Left ventricle myocardium inferior (tissue), 1 donor: ENCODE measurements at regions of chr5 and their contacts with region 1.

Region 1: GRCh38 chr5:64612344-64612961 is 77.8 kb upstream of the SHISAL2B start:
- DNase-seq: no peak
- H3K4me3 ChIP-seq: no peak overlapping the region
- H3K27ac ChIP-seq: no peak overlapping the region
- H3K4me1 ChIP-seq: no peaks in the 10 kb centered on the region
- H3K27me3 ChIP-seq: no peaks in the 10 kb centered on the region
- CTCF ChIP-seq: peak; percentile 85

Region 2: GRCh38 chr5:64229163-64229774 is 383.2 kb before region 1 on chr5:
- intact Hi-C with region 1: loop called (anchors 2 kb)
- DNase-seq: no peak
- H3K4me3 ChIP-seq: no peak overlapping the region
- H3K27ac ChIP-seq: no peak overlapping the region
- H3K4me1 ChIP-seq: no peaks in the 10 kb centered on the region
- H3K27me3 ChIP-seq: no peaks in the 10 kb centered on the region
- CTCF ChIP-seq: peak; percentile 74

Region 3: DNA sequence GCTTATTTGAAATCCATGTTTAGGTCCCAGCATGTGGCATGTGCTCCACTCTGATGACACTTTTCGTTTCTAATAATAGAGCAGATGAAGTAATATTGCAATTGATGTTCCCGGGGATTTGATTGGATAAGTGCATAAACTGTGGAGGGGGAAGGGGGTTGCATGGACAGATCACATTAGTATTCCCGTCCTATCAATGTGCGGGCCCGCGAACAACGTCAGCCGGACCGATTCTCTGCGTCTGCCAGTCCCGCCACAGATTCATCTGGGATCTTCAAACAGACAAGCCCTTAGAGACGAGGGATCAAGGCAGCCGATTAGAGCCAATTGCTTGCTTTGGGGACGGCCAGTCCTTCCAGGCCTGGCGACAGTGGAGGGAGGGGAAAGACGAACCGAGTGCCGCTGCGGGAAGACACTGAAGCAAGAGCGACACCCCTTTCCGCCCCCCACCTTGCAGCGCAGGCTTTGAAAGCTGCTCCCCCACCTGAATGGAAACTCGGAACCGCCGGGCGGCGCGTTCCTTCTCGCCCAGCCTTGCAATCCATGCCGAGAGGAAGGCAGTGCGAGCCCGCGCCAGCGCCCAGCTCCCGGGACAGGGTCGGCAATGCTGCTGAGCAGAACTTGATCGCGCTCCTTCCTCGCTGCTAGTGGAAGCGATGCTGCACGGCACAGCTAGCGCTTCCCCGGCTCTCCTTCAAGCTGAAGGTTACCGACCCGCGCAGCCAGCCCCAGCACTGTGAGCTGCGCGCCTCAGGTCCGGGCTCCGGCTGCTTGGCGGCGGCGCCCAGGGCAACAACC is 106.5 kb before region 1 on chr5 and contains the start of gene RGS7BP:
- intact Hi-C with region 1: loop called (anchors 10 kb)
- DNase-seq: peak; percentile 40
- H3K4me3 ChIP-seq: peak within 1 kb of the TSS; percentile 72
- H3K27ac ChIP-seq: peak within 1 kb of the TSS; percentile 73
- H3K4me1 ChIP-seq: peaks cover 19% of the 10 kb centered on the region
- H3K27me3 ChIP-seq: peaks cover 55% of the 10 kb centered on the region
- CTCF ChIP-seq: peak; percentile 55
- total RNA-seq, gene RGS7BP: 3.6 TPM

Region 4: DNA sequence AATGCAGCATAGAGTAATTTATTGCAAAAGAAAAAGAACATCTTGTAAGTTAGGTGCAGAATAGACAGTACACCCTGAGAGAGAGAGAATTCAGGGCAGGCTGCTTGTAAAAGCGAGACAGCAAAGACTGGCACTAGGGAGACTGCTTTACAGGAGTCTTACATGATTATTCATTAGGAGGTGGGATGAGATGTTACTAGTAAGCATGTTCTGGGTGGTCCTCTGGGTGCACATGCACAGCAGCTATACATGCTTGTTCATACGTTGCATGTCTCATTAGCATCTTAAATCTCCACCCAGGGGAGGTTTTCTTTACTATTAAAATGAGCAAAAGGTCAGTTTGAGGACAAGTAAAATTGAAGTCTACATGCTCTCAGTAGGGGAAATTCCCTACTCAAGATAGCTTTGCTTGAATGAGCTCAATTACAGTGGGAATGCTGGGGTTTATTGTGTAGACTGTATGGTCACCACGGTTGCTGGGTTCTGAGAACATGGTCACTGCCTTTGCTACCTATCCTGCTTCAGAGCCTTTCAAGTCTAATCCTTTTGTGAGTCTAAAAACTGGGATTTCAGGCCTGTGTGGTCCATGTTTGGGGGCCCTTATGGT is 46.0 kb before region 1 on chr5:
- intact Hi-C with region 1: no loop called
- DNase-seq: no peak
- H3K4me3 ChIP-seq: no peak overlapping the region
- H3K27ac ChIP-seq: no peak overlapping the region
- H3K4me1 ChIP-seq: peaks cover 18% of the 10 kb centered on the region
- H3K27me3 ChIP-seq: no peaks in the 10 kb centered on the region
- CTCF ChIP-seq: no peak

Region 5: DNA sequence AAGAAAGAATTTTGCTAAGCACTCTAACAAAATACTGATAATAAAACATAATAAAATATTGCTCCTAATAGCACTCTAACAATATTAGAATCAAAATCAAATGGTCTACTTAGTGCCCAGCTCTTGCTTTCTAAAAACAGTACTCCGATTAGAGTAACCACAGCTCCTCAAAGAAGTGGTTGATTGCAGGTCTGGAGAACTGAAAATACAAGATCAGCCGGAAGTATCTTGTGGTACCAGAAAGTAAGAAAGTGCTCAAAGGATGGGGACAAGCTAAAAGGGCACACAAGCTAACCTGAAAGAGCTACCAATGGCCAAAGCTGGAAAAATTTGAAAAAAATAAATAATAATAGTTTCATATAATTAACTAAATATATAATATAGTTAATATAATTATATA is 275.5 kb after region 1 on chr5:
- intact Hi-C with region 1: no loop called
- DNase-seq: no peak
- H3K4me3 ChIP-seq: no peak overlapping the region
- H3K27ac ChIP-seq: no peak overlapping the region
- H3K4me1 ChIP-seq: no peaks in the 10 kb centered on the region
- H3K27me3 ChIP-seq: no peaks in the 10 kb centered on the region
- CTCF ChIP-seq: no peak